Ovary (tissue), 10 donors: ENCODE measurements at regions of chr4 and their contacts with region 1.

Region 1: DNA sequence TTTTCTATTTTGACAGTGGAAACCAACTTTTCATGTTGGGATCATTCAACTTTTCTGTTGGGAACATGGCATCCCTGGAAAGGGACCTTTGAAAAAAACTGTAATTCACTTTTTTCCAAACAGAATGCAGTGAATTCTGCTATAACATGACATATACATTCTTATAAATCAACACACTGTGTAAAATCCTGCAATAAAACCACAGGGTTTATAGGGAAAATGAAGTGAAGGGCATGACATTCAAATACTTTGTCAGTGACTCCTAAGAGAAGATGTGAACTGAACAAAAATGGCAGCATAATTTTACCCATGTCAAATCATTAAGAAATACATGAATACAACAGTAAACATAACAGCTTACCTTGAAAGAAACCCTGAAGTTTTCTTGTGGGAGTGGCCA is 264.5 kb upstream of the ANKRD50 start:
- DNase-seq: no peak
- H3K4me3 ChIP-seq: no peak overlapping the region
- H3K27ac ChIP-seq: no peak overlapping the region
- H3K4me1 ChIP-seq: no peaks in the 10 kb centered on the region
- H3K27me3 ChIP-seq: no peaks in the 10 kb centered on the region
- CTCF ChIP-seq: no peak
- EP300 ChIP-seq: no peak
- POLR2A ChIP-seq: no peak

Region 2: DNA sequence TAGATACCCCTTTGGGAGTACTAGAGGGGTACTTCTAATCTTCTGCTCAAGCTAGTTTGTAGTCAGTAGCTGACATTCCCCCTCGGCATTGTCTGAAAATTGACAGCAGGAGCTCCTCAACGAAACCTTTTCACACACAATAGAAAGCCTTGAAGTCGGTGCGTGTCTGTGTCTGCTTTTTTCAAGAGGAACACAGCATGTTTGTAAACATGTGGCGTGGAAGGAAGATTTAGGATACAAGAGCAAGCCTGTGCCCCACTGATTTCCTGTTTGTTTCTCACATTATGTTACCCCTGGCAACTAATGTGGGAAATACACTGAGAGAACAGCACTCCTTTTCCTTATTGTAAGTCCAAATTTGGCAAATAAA is 517.1 kb before region 1 on chr4:
- intact Hi-C with region 1: loop called in 1 of 4 experiments (anchors 5 kb)
- DNase-seq: no peak
- H3K4me3 ChIP-seq: no peak overlapping the region
- H3K27ac ChIP-seq: no peak overlapping the region
- H3K4me1 ChIP-seq: no peaks in the 10 kb centered on the region
- H3K27me3 ChIP-seq: no peaks in the 10 kb centered on the region
- CTCF ChIP-seq: no peak
- EP300 ChIP-seq: no peak
- POLR2A ChIP-seq: no peak

Region 3: DNA sequence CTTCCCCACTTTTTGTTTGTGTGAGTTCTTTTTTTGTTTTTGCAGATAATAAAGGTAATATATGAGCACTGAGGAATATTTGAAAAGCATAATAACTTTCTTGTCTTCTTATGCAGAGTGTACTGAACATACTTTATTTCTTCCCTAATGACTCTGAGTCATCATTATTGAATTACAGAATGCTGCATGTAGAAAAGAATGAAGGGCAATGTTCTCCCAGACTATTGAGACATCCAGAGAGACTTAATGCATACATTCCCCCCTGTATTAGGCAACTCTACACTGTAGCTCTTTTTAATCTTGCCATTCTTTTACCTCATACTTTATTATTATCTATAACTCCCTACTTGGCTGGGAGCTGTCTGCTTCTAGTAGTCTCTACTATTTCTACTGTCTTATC is 24.0 kb before region 1 on chr4:
- intact Hi-C with region 1: no loop called
- DNase-seq: no peak
- H3K4me3 ChIP-seq: no peak overlapping the region
- H3K27ac ChIP-seq: no peak overlapping the region
- H3K4me1 ChIP-seq: no peaks in the 10 kb centered on the region
- H3K27me3 ChIP-seq: no peaks in the 10 kb centered on the region
- CTCF ChIP-seq: no peak
- EP300 ChIP-seq: no peak
- POLR2A ChIP-seq: no peak

Region 4: DNA sequence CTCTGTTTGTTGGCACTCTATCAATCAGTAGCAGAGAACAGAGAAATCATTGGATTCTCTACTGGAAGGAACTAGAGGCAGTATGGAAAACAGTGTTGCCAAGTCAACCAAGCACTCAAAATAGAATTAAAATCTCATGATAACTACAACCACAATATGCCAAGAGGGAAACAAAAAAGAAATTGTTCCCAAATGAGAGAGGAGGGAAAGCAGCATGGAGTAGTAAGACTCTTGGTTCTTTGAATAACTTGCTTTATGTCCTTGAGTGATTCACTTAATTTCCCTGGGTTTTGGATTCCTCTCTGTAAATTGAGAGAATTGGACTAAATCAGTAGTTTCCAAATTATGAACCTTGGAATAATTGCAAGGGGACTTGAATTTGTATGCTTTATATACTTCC is 20.9 kb after region 1 on chr4:
- intact Hi-C with region 1: no loop called
- DNase-seq: no peak
- H3K4me3 ChIP-seq: no peak overlapping the region
- H3K27ac ChIP-seq: no peak overlapping the region
- H3K4me1 ChIP-seq: no peaks in the 10 kb centered on the region
- H3K27me3 ChIP-seq: no peaks in the 10 kb centered on the region
- CTCF ChIP-seq: no peak
- EP300 ChIP-seq: no peak
- POLR2A ChIP-seq: no peak